Endothelial cell of umbilical vein (primary cell): ENCODE measurements at regions of chr20 and their contacts with region 1.

Region 1: GRCh38 chr20:52127309-52127708 is 64.3 kb downstream of the ZFP64 start:
- DNase-seq: no peak
- H3K4me3 ChIP-seq: no peak overlapping the region
- H3K27ac ChIP-seq: no peak overlapping the region
- H3K4me1 ChIP-seq: no peaks in the 10 kb centered on the region
- H3K27me3 ChIP-seq: no peaks in the 10 kb centered on the region
- CTCF ChIP-seq: no peak
- POLR2A ChIP-seq: no peak

Region 2: DNA sequence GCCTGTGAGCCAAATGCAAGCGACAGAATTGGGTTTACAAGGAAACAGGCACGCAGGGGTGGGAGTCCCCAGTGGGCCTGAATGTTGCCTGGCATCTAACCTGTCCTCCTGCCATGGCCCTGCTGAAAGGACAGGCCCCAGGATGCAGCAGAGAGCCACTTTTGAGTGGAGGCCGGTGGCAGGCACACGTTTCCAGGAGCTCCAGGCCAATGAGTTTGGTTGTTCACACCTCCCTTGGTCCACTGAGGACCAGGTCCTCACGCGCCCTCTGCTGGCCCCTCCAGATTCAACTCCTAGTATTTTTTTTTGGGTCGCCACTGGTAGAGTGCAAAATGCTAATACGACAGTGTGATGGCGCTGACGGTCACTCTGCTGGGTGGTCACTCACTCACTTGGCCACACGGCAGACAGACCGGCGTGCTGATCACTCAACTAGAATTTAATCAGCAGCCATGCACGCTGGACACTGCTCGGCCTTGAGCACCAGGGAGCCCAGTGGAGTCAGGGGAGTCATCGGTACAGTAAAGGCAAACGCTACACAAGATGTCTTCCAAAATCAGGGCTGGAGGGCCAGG is 503.1 kb before region 1 on chr20:
- CTCF ChIA-PET with region 1: no interaction called
- POLR2A ChIA-PET with region 1: no interaction called
- dilution Hi-C with region 1: no loop called
- intact Hi-C with region 1: no loop called
- DNase-seq: peak; percentile 81
- H3K4me3 ChIP-seq: no peak overlapping the region
- H3K27ac ChIP-seq: peak overlapping the region; percentile 41
- H3K4me1 ChIP-seq: peaks cover 14% of the 10 kb centered on the region
- H3K27me3 ChIP-seq: no peaks in the 10 kb centered on the region
- CTCF ChIP-seq: peak; percentile 82 to 84
- POLR2A ChIP-seq: no peak

Region 3: GRCh38 chr20:52104546-52105441 is 22.5 kb before region 1 on chr20:
- CTCF ChIA-PET with region 1: interaction called, 18 read pairs
- POLR2A ChIA-PET with region 1: no interaction called
- dilution Hi-C with region 1: no loop called
- intact Hi-C with region 1: no loop called
- DNase-seq: peak; percentile 56
- H3K4me3 ChIP-seq: peak overlapping the region; percentile 43 to 71 (median 64)
- H3K27ac ChIP-seq: peak overlapping the region; percentile 37
- H3K4me1 ChIP-seq: peaks cover 26% of the 10 kb centered on the region
- H3K27me3 ChIP-seq: no peaks in the 10 kb centered on the region
- CTCF ChIP-seq: no peak
- POLR2A ChIP-seq: no peak

Region 4: DNA sequence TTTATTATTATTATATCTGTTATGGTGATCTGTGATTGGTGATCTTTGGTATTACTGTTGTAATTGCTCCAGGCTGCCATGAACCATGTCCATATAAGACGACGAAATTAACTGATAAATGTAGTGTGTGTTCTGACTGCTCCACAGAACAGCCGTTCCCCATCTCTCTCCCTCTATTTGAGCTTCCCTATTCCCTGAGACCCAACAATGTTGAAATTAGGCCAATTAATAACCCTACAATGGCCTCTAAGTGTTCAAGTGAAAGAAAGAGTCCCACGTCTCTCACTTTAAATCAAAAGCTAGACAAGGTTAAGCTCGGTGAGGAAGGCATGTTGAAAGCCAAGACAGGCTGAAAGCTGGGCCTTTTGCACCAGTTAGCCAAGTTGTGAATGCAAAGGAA is 12.7 kb after region 1 on chr20:
- CTCF ChIA-PET with region 1: interaction called, 15 read pairs
- POLR2A ChIA-PET with region 1: no interaction called
- dilution Hi-C with region 1: no loop called
- intact Hi-C with region 1: no loop called
- DNase-seq: no peak
- H3K4me3 ChIP-seq: no peak overlapping the region
- H3K27ac ChIP-seq: no peak overlapping the region
- H3K4me1 ChIP-seq: no peaks in the 10 kb centered on the region
- H3K27me3 ChIP-seq: no peaks in the 10 kb centered on the region
- CTCF ChIP-seq: no peak
- POLR2A ChIP-seq: no peak

Region 5: GRCh38 chr20:52150440-52151258 is 23.3 kb after region 1 on chr20:
- CTCF ChIA-PET with region 1: interaction called, 53 read pairs
- POLR2A ChIA-PET with region 1: no interaction called
- dilution Hi-C with region 1: no loop called
- intact Hi-C with region 1: loop called (anchors 1 kb)
- DNase-seq: peak; percentile 72
- H3K4me3 ChIP-seq: no peak overlapping the region
- H3K27ac ChIP-seq: no peak overlapping the region
- H3K4me1 ChIP-seq: no peaks in the 10 kb centered on the region
- H3K27me3 ChIP-seq: no peaks in the 10 kb centered on the region
- CTCF ChIP-seq: peak; percentile 61 to 73
- POLR2A ChIP-seq: no peak

Region 6: GRCh38 chr20:52191132-52191915 is 64.0 kb after region 1 on chr20 and contains the start of gene ZFP64:
- CTCF ChIA-PET with region 1: interaction called, 4 read pairs
- POLR2A ChIA-PET with region 1: no interaction called
- dilution Hi-C with region 1: no loop called
- intact Hi-C with region 1: loop called (anchors 2 kb)
- DNase-seq: peak; percentile 80
- H3K4me3 ChIP-seq: peak within 1 kb of the TSS; percentile 51 to 83 (median 75)
- H3K27ac ChIP-seq: peak within 1 kb of the TSS; percentile 36
- H3K4me1 ChIP-seq: peaks cover 12% of the 10 kb centered on the region
- H3K27me3 ChIP-seq: no peaks in the 10 kb centered on the region
- CTCF ChIP-seq: peak; percentile 58 to 70
- POLR2A ChIP-seq: peak; percentile 31
- total RNA-seq, gene ZFP64: 31.7 and 34.4 TPM in 2 replicates

Region 7: GRCh38 chr20:52219441-52219840 is 92.1 kb after region 1 on chr20:
- CTCF ChIA-PET with region 1: interaction called, 12 read pairs
- POLR2A ChIA-PET with region 1: no interaction called
- dilution Hi-C with region 1: no loop called
- intact Hi-C with region 1: loop called (anchors 1 kb)
- DNase-seq: no peak
- H3K4me3 ChIP-seq: no peak overlapping the region
- H3K27ac ChIP-seq: no peak overlapping the region
- H3K4me1 ChIP-seq: no peaks in the 10 kb centered on the region
- H3K27me3 ChIP-seq: peaks cover 0 to 5% of the 10 kb centered on the region in 2 experiments
- CTCF ChIP-seq: no peak
- POLR2A ChIP-seq: no peak

Region 8: DNA sequence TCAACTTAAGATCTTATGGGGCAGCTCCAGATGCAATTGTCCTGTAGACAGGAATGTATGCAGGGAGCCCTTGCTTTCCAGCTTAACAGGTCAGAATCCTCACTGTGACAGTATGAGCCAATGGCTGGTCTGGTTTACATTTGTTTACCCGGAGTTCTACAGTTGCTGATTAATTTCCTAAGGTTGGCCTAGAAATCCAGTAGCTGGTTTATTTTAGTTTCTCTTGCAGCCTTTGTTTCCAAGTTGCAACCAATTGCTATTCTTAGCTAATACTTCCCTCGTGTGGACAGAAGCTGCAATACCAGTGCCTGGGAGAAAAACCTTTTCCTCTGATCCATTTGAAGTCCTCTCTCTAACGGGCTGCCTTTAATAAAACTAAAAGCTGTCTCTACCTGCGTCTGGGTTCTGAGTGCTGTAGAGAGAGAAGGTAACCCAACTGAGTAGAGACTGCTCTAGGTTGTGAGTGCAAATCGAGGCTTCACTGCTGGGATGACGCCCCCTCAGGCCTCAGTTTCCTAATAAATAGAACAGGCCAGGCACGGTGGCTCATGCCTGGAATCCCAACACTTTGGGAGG is 1420.4 kb after region 1 on chr20:
- CTCF ChIA-PET with region 1: interaction called, 29 read pairs
- POLR2A ChIA-PET with region 1: no interaction called
- dilution Hi-C with region 1: no loop called
- intact Hi-C with region 1: no loop called
- DNase-seq: peak; percentile 68
- H3K4me3 ChIP-seq: no peak overlapping the region
- H3K27ac ChIP-seq: no peak overlapping the region
- H3K4me1 ChIP-seq: no peaks in the 10 kb centered on the region
- H3K27me3 ChIP-seq: no peaks in the 10 kb centered on the region
- CTCF ChIP-seq: peak; percentile 48 to 65
- POLR2A ChIP-seq: no peak